Lower leg skin (tissue), 4 donors: ENCODE measurements at regions of chrX and their contacts with region 1.

Region 1: GRCh38 chrX:82342531-82342930 is 1140.6 kb downstream of the SH3BGRL start:
- DNase-seq: no peak
- H3K4me3 ChIP-seq: no peak overlapping the region
- CTCF ChIP-seq: no peak
- POLR2A ChIP-seq: no peak

Region 2: GRCh38 chrX:81054904-81055303 is 1287.6 kb before region 1 on chrX:
- intact Hi-C with region 1: no loop called
- DNase-seq: no peak
- H3K4me3 ChIP-seq: no peak overlapping the region
- CTCF ChIP-seq: no peak
- POLR2A ChIP-seq: no peak

Region 3: DNA sequence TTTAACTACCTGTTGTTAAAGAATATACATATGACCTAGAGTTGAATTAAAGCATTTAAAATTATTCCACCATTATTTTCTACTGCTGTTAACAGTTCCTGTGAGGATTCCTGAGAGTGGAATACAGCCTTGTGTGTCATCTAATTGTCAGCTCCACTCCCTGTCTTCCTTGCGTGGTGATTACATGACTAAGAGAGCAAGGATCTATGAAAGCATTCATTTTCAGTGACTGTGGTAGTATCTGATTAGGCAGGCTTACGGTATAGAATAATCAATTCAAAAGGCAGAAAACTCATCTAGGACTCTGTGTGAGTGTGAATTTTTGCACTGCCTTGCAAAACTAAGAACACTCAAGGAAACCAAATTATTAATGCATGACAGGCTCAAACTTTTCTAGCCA is 562.8 kb before region 1 on chrX:
- intact Hi-C with region 1: loop called (anchors 5 kb)
- DNase-seq: no peak
- H3K4me3 ChIP-seq: no peak overlapping the region
- CTCF ChIP-seq: no peak
- POLR2A ChIP-seq: no peak

Region 4: GRCh38 chrX:82087699-82088098 is 254.8 kb before region 1 on chrX:
- intact Hi-C with region 1: no loop called
- DNase-seq: no peak
- H3K4me3 ChIP-seq: no peak overlapping the region
- CTCF ChIP-seq: no peak
- POLR2A ChIP-seq: no peak

Region 5: GRCh38 chrX:82230009-82230408 is 112.5 kb before region 1 on chrX:
- intact Hi-C with region 1: no loop called
- DNase-seq: no peak
- H3K4me3 ChIP-seq: no peak overlapping the region
- CTCF ChIP-seq: no peak
- POLR2A ChIP-seq: no peak

Region 6: GRCh38 chrX:84118761-84119160 is 1776.2 kb after region 1 on chrX:
- intact Hi-C with region 1: no loop called
- DNase-seq: no peak
- H3K4me3 ChIP-seq: no peak overlapping the region
- CTCF ChIP-seq: no peak
- POLR2A ChIP-seq: no peak